Dorsolateral prefrontal cortex (tissue), 120 donors: ENCODE measurements at regions of chr7 and their contacts with region 1.

Region 1: DNA sequence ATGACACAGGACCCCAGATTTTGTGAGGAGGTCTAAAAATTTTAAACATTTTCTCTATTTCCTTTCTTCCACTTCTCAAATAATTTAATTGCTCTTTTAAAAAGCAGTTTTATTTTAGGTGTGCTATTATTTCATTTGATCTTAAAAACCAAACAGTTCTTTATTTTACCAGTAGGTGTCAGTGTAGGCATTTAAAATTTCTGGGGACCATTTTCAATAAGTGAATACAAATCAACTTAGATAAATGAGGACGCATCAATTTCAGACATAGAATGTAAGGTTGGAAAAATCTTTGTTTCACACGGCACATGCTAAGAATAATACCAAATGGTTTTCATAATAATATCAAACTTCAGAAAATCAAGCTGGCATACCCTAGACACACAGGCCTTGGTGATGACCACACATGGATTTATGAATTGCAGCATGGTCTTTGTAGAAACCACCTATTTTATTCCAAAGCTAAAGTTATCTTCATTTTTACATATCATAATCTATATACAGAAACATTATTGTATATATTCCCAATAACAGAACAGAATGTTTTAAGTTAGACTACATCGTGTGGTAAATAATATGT is 127.6 kb upstream of the SLC26A5 start:
- DNase-seq: no peak
- H3K4me3 ChIP-seq: no peak overlapping the region
- H3K27ac ChIP-seq: peak overlapping the region in 1 of 59 donors; percentile 32
- H3K27me3 ChIP-seq: peaks cover 0 to 2% (median 0%) of the 10 kb centered on the region in 45 donors
- CTCF ChIP-seq: peak; percentile 66 to 93 (median 81)

Region 2: GRCh38 chr7:103524042-103524907 is 49.3 kb before region 1 on chr7:
- intact Hi-C with region 1: loop called in 1 of 2 experiments (anchors 5 kb)
- DNase-seq: peak in 7 of 10 donors; percentile 35 to 61 (median 45)
- H3K4me3 ChIP-seq: peak overlapping the region in 45 of 59 donors; percentile 1 to 55 (median 28)
- H3K27ac ChIP-seq: peak overlapping the region in 56 of 59 donors; percentile 7 to 85 (median 68)
- H3K27me3 ChIP-seq: no peaks in the 10 kb centered on the region
- CTCF ChIP-seq: peak; percentile 13 to 90 (median 69)

Region 3: GRCh38 chr7:103542470-103542869 is 31.1 kb before region 1 on chr7:
- intact Hi-C with region 1: loop called in 1 of 2 experiments (anchors 2 kb)
- DNase-seq: no peak
- H3K4me3 ChIP-seq: no peak overlapping the region
- H3K27ac ChIP-seq: peak overlapping the region in 44 of 59 donors; percentile 11 to 100 (median 98)
- H3K27me3 ChIP-seq: no peaks in the 10 kb centered on the region
- CTCF ChIP-seq: no peak

Region 4: GRCh38 chr7:103630318-103630717 is 56.7 kb after region 1 on chr7:
- intact Hi-C with region 1: no loop called
- DNase-seq: no peak
- H3K4me3 ChIP-seq: no peak overlapping the region
- H3K27ac ChIP-seq: no peak overlapping the region
- H3K27me3 ChIP-seq: peaks cover 0 to 4% (median 0%) of the 10 kb centered on the region in 45 donors
- CTCF ChIP-seq: no peak